A549 (cell line): ENCODE measurements at regions of chr7 and their contacts with region 1.

Region 1: GRCh38 chr7:1193593-1194424 is 33.8 kb upstream of the ZFAND2A start:
- DNase-seq: peak; percentile 65 to 69
- ATAC-seq: peak; percentile 96 to 97
- H3K4me3 ChIP-seq: no peak overlapping the region
- H3K27ac ChIP-seq: no peak overlapping the region
- H3K4me1 ChIP-seq: no peaks in the 10 kb centered on the region
- CTCF ChIP-seq: peak; percentile 65
- EP300 ChIP-seq: no peak
- POLR2A ChIP-seq: no peak
- RAD21 ChIP-seq: peak; percentile 90 to 91

Region 2: DNA sequence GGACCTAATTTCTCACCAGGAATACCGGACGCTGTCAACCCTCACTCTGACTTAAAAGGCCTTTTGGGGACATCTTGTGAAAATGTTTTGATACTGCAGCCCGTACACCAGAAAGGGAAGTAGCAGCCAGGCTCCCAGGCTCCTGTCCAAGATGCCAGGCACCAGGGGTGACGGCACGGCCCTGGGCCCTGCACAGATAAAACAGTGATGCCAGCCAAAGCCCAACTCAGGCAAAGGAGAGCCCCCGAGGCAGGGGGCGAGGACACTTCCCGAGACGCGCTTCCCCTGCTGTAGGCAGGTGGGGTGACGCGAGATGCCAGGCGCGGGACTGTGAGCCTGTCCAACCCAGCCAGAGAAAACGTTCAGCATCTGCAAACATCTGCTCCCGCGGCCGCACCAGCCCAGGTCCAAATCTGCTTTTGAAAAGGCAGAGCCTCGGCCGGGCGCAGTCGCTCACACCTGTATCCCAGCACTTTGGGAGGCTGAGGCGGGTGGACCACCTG is 49.5 kb before region 1 on chr7:
- CTCF ChIA-PET with region 1: no interaction called
- POLR2A ChIA-PET with region 1: no interaction called
- DNase-seq: peak in 1 of 2 experiments; percentile 41
- ATAC-seq: peak; percentile 64 to 75; a peak in 5 of 6 replicates
- H3K4me3 ChIP-seq: no peak overlapping the region
- H3K27ac ChIP-seq: no peak overlapping the region
- H3K4me1 ChIP-seq: no peaks in the 10 kb centered on the region
- CTCF ChIP-seq: no peak
- EP300 ChIP-seq: no peak
- POLR2A ChIP-seq: no peak
- RAD21 ChIP-seq: peak in 1 of 2 experiments; percentile 35; a peak in 2 of 5 replicates

Region 3: DNA sequence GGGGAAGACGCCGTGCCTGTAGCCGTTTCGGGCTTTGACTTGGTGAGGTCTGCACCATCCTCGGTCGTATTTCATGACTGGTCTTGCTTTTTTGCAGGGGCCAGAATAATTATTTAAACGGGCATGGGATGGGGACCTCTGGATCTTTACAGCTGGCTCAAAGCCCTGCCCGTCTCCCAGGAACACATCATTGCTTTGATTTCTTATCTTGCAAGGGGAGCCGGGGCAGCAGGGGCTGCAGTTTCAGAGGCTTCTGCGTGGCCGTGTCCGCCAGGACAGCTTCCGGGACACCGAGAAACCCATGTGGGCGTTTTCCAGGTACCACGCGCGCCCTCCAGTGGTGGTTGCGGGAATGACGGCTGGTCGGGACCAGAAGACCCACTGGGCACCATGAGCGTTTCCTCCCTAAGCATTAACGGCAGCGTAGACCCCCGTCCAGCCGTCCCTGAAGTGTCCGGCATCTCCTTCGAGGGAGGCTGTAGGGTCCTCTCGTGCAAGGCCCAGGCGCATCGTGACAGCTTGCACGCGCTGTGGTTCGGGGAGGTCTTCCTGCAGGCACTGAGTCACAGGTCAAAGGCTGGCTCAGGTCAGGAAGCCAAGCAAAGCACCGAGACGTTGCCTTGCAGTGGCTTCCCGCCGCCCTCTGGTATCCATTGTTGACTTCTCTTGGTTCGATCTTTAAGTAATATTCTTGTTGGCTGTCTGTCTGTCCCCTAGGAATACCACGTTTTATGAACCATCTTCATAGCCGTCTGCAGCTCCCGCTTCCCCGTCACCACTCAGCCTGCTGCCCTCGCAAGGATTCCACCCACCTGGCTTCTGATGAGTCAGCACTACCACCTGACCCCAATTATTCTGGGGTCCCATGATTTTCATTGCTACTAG is 17.6 kb before region 1 on chr7:
- CTCF ChIA-PET with region 1: interaction called, 57 read pairs
- POLR2A ChIA-PET with region 1: no interaction called
- DNase-seq: peak; percentile 79 to 85
- ATAC-seq: peak; percentile 86 to 92
- H3K4me3 ChIP-seq: peak overlapping the region; percentile 34
- H3K27ac ChIP-seq: peak overlapping the region; percentile 78 to 87
- H3K4me1 ChIP-seq: peaks cover 11% of the 10 kb centered on the region; the same call in 2 of the 3 replicates
- CTCF ChIP-seq: peak; percentile 86
- EP300 ChIP-seq: no peak
- POLR2A ChIP-seq: 0 out of 2 replicates have a peak, but pooled peaks have one; percentile 23
- RAD21 ChIP-seq: peak; percentile 70 to 79

Region 4: DNA sequence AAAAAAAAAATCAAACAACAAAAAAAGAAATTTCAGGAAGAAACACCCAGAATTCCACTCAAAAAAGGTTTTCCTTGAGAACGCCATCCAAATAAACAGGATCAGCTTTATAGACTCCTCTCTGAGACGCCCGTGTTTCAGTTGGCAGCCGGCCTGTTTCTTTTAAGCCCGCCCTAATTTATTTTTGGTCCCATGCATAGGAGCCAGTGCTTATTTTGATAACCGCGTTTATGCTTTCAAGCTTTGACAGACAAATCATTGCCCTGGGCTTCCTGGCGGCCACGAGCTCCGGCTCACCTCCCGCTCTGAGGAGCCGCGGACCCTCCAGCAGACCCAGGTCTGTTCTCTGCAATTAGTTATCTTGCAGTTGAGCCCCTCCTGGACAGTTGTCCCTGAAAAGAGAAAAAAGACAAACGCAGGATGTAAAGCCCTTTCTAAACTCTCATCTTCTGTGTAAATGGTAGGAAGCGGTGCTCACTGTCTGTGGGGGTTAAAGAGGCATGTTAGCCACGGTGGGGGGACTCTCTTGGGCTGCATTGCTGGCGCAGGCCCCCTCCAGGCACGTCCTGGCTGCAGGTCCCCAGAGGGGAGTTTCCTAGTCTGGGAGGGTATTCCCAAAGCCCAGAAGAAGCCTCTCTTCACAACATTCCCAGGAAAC is 16.6 kb after region 1 on chr7:
- CTCF ChIA-PET with region 1: interaction called, 10 read pairs
- POLR2A ChIA-PET with region 1: no interaction called
- DNase-seq: no peak
- ATAC-seq: no peak
- H3K4me3 ChIP-seq: no peak overlapping the region
- H3K27ac ChIP-seq: no peak overlapping the region
- H3K4me1 ChIP-seq: no peaks in the 10 kb centered on the region
- CTCF ChIP-seq: no peak
- EP300 ChIP-seq: no peak
- POLR2A ChIP-seq: no peak
- RAD21 ChIP-seq: no peak

Region 5: GRCh38 chr7:1364068-1364905 is 170.5 kb after region 1 on chr7:
- CTCF ChIA-PET with region 1: interaction called, 11 read pairs
- POLR2A ChIA-PET with region 1: no interaction called
- DNase-seq: no peak
- ATAC-seq: no peak
- H3K4me3 ChIP-seq: no peak overlapping the region
- H3K27ac ChIP-seq: no peak overlapping the region
- H3K4me1 ChIP-seq: peaks cover 6% of the 10 kb centered on the region
- CTCF ChIP-seq: no peak
- EP300 ChIP-seq: no peak
- POLR2A ChIP-seq: no peak
- RAD21 ChIP-seq: no peak

Region 6: DNA sequence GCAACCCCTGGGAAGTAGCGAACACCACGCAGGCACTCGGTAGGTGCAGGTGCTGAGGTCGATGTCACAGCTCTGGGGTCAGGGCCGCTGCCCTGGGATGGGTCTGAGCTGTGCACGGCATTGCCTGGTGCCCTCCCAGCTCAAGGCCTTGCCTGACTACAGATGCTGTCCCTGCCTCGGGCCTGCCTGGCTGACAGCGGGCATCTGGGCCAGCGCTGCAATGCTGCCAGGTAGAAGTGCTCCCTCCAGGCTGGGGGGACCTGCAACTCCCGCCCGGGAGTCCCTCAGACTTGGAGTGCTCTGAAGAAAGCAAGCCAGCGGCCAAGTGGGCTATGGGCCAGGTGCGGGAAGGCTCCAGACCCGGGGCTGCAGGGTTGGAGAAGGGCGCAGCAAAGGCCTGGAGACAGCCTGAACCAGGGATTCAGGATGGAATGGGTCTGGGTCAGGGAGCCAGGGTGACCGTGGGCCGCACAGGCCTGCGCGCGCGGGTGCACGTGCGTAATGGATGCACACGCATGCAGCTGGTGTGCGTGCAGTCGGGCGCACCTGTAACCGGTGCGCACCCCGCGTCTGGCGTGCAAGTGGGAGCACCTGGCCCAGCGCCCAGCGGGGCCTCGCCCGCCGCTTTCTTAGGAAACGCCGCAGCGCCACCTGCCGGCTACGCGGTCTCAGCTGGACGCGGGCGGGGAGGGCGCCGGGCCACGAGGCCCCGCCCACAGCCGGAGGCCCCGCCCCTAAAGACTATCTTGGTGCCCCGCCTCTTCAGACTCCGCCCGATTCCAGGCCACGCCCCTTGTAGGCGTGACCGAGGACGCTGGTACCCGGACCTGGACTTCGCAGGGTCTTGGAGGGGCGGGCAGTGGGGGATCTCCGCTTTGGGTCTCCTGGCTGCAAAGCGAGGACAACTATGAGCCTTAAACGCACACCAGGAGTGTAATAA is 218.8 kb after region 1 on chr7:
- CTCF ChIA-PET with region 1: interaction called, 42 read pairs
- POLR2A ChIA-PET with region 1: no interaction called
- DNase-seq: peak; percentile 85 to 88
- ATAC-seq: peak; percentile 63 to 91
- H3K4me3 ChIP-seq: peak overlapping the region; percentile 26; the same call in 2 of the 3 replicates
- H3K27ac ChIP-seq: 0 out of 6 replicates have a peak overlapping the region, but pooled peaks of 1 of the 2 experiments have one; percentile 34
- H3K4me1 ChIP-seq: no peaks in the 10 kb centered on the region
- CTCF ChIP-seq: peak; percentile 98
- EP300 ChIP-seq: no peak
- POLR2A ChIP-seq: no peak
- RAD21 ChIP-seq: peak; percentile 82 to 96

Region 7: GRCh38 chr7:1447551-1448244 is 253.9 kb after region 1 on chr7:
- CTCF ChIA-PET with region 1: interaction called, 11 read pairs
- POLR2A ChIA-PET with region 1: no interaction called
- DNase-seq: no peak
- ATAC-seq: peak; percentile 11 to 35; a peak in 4 of 6 replicates
- H3K4me3 ChIP-seq: no peak overlapping the region
- H3K27ac ChIP-seq: peak overlapping the region in 1 of 2 experiments; percentile 24; a peak in 1 of 6 replicates
- H3K4me1 ChIP-seq: peaks cover 7% of the 10 kb centered on the region; the same call in 2 of the 3 replicates
- CTCF ChIP-seq: no peak
- EP300 ChIP-seq: no peak
- POLR2A ChIP-seq: no peak
- RAD21 ChIP-seq: no peak